Activated CD4-positive, alpha-beta T cell treated with anti-CD3 and anti-CD28 coated beads, Interleukin-2, amount 10 ng/mL, durations not matched to agents 7 days and 5 days (primary cell): ENCODE measurements at regions of chr7 and their contacts with region 1.

Region 1: GRCh38 chr7:140358412-140359051 is 39.8 kb downstream of the SLC37A3 start:
- DNase-seq: peak; percentile 19
- H3K4me3 Mint-ChIP-seq: peak overlapping the region; percentile 72
- H3K27ac Mint-ChIP-seq: peak overlapping the region; percentile 99
- H3K4me1 Mint-ChIP-seq: peaks cover 32% of the 10 kb centered on the region
- H3K27me3 Mint-ChIP-seq: no peaks in the 10 kb centered on the region

Region 2: GRCh38 chr7:139365336-139365735 is 993.2 kb before region 1 on chr7:
- CTCF ChIA-PET with region 1: interaction called, 10 read pairs
- POLR2A ChIA-PET with region 1: no interaction called
- DNase-seq: no peak
- H3K4me3 Mint-ChIP-seq: no peak overlapping the region
- H3K27ac Mint-ChIP-seq: no peak overlapping the region
- H3K4me1 Mint-ChIP-seq: peaks cover 64% of the 10 kb centered on the region
- H3K27me3 Mint-ChIP-seq: no peaks in the 10 kb centered on the region

Region 3: DNA sequence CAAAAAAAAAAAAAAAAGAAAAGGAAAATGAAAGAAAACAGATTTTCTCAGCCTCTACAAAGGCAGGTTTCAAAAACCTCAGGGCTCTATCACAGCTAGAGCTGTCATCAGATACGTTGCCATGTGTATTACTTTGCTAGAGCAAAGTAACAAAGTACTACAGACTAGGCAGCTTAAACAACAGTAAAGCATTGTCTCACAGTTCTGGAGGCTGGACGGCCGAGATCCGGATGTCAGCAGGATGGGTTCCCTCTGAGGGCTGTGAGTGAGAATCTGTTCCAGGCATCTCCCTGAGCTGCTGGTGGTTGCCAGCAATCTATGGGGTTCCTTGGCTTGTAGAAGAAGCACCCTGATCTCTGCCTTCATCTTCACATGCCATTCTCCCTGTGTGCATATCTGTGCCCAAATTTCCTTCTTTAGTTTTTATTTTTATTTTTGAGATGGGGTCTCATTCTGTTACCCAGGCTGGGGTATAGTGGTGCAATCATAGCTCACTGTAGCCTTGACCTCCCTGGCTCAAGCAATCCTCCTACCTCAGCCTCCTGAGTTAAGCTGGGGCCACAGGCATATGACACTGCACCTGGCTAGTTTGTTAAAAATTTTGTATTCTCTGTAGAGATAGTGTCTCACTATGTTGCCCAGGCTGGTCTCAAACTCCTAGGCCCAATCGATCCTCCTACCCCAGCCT is 132.8 kb before region 1 on chr7:
- CTCF ChIA-PET with region 1: no interaction called
- POLR2A ChIA-PET with region 1: interaction called, 10 read pairs
- DNase-seq: peak; percentile 47
- H3K4me3 Mint-ChIP-seq: peak overlapping the region; percentile 55
- H3K27ac Mint-ChIP-seq: peak overlapping the region; percentile 92
- H3K4me1 Mint-ChIP-seq: peaks cover 54% of the 10 kb centered on the region
- H3K27me3 Mint-ChIP-seq: no peaks in the 10 kb centered on the region

Region 4: DNA sequence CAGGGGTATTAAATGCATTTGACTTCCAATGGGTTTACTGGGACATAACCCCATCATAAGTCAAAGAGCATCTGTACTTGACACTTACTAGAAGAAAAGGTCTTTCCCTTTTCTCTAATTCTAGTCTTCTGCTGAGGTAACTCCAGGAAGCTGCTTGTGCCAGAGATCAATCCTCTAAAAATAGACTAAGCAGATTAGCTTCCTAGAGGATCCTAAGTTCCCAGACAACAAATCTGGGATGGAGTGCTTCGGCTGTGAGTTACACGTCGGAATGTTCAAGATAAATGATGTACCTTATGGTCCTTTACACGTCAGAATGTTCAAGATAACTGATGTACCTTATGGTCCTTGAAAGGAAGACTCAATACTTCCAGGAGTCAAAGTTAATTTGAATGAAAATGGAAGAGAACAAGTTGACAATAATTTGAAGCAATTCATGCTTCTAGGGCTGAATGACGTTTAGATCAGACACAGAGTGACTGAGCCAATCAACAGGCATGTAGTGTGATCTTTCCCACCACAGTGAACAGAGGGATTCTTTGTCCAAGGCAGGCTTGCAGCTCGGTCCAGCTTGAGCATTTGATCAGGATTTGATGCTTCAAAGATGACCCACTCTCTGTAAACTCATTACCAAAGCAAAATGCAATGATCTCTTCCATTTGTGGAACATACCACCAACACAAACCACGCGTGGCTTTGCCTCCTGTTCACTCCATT is 24.0 kb before region 1 on chr7:
- CTCF ChIA-PET with region 1: no interaction called
- POLR2A ChIA-PET with region 1: no interaction called
- DNase-seq: no peak
- H3K4me3 Mint-ChIP-seq: no peak overlapping the region
- H3K27ac Mint-ChIP-seq: no peak overlapping the region
- H3K4me1 Mint-ChIP-seq: no peaks in the 10 kb centered on the region
- H3K27me3 Mint-ChIP-seq: no peaks in the 10 kb centered on the region

Region 5: DNA sequence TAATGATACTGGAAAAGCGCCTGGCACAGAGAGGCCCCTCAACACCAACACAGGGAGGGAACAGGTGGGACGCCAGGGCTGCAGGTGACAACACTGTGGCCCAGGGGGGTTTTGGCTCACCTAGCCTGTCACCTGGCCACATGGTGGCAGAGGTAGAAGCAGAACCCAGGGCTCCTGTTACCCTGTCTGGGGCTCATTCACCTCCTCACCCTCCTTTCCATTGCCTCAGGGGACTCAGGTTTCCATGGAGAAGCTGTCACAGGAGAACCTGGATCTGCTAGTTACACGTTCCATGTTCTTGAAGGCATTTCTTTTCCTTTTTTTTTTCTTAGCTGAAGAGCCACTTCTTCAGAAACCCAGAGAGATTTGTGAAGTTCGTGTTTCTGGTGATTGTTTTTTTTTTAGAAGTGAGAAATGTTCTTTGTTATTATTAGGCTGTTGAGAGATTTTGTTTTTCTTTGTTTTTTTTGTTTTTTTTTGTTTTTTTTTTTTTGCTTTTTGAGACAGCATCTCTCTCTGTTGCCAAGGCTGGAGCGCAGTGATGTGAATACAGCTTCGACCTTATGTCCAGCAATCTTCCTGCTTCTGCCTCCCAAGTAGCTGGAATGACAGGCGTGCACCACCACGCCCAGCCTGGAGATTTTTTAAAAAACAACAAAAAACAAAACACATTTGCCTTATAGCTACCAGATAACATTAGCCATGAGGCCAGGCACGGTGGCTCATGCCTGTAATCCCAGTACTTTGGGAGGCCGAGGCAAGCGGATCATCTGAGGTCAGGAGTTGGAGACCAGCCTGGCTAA is 266.1 kb after region 1 on chr7:
- CTCF ChIA-PET with region 1: no interaction called
- POLR2A ChIA-PET with region 1: no interaction called
- DNase-seq: no peak
- H3K4me3 Mint-ChIP-seq: no peak overlapping the region
- H3K27ac Mint-ChIP-seq: no peak overlapping the region
- H3K4me1 Mint-ChIP-seq: no peaks in the 10 kb centered on the region
- H3K27me3 Mint-ChIP-seq: peaks cover 6% of the 10 kb centered on the region